GM12878 (cell line): ENCODE measurements at regions of chr7 and their contacts with region 1.

Region 1: GRCh38 chr7:47557169-47557985 is 24.5 kb downstream of the TNS3 start:
- DNase-seq: no peak
- ATAC-seq: no peak
- H3K4me3 ChIP-seq: no peak overlapping the region
- H3K27ac ChIP-seq: no peak overlapping the region
- H3K4me1 ChIP-seq: peaks cover 8% of the 10 kb centered on the region
- H3K27me3 ChIP-seq: no peaks in the 10 kb centered on the region; a peak in 1 of 4 replicates
- CTCF ChIP-seq: no peak
- EP300 ChIP-seq: no peak
- POLR2A ChIP-seq: no peak
- RAD21 ChIP-seq: no peak

Region 2: GRCh38 chr7:47119261-47119865 is 438.0 kb before region 1 on chr7:
- CTCF ChIA-PET with region 1: no interaction called
- POLR2A ChIA-PET with region 1: no interaction called
- RAD21 ChIA-PET with region 1: no interaction called
- SMC1A ChIA-PET with region 1: no interaction called
- in situ Hi-C with region 1: no loop called
- intact Hi-C with region 1: no loop called
- DNase-seq: no peak
- ATAC-seq: no peak
- H3K4me3 ChIP-seq: no peak overlapping the region
- H3K27ac ChIP-seq: no peak overlapping the region
- H3K4me1 ChIP-seq: no peaks in the 10 kb centered on the region
- H3K27me3 ChIP-seq: no peaks in the 10 kb centered on the region; a peak in 1 of 4 replicates
- CTCF ChIP-seq: no peak
- EP300 ChIP-seq: no peak
- POLR2A ChIP-seq: no peak
- RAD21 ChIP-seq: no peak

Region 3: DNA sequence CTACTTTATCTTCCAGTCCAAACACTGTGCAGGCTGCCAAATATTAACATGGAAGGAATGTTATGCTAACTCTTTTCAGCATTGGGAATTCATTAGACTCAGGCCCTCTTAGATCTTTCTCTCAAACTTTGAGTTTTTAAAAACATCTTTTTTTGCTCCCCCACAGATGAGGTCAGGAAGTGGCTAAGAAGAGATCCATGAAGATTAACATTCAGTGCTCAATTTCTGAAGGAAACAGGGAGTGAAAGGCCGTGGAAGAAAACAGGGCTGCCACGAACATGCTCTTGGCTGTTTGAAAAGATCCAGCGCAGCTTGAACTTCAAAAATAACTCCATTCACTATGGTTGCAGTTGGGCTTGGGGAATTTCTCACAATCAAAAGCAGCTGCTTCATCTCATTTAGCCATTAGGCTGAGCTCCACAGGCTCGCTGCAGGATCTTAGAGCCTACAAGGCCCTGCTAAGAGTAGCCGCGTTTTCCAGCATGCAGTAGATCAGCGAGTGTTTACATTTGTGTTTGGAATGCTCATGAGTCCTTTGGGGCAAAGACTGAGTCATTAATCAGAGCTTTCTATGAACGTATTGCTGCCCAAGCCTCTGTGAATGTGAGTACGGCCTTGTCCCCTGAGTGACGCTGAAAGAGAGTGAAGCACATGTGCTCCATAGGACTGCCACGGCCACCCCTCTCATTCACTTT is 65.7 kb after region 1 on chr7:
- CTCF ChIA-PET with region 1: no interaction called
- POLR2A ChIA-PET with region 1: no interaction called
- RAD21 ChIA-PET with region 1: no interaction called
- SMC1A ChIA-PET with region 1: no interaction called
- in situ Hi-C with region 1: no loop called
- intact Hi-C with region 1: loop called (anchors 5 kb)
- DNase-seq: no peak
- ATAC-seq: no peak
- H3K4me3 ChIP-seq: no peak overlapping the region
- H3K27ac ChIP-seq: no peak overlapping the region
- H3K4me1 ChIP-seq: peaks cover 10% of the 10 kb centered on the region
- H3K27me3 ChIP-seq: peaks cover 0 to 3% of the 10 kb centered on the region in 2 experiments; a peak in 2 of 4 replicates
- CTCF ChIP-seq: no peak
- EP300 ChIP-seq: no peak
- POLR2A ChIP-seq: no peak
- RAD21 ChIP-seq: no peak